ENCODE measurements at regions of chr19 and their contacts with region 1.

Region 1: GRCh38 chr19:1020868-1021425 is at the start of gene TMEM259:
- DNase-seq: peak; percentile 95
- ATAC-seq: peak; percentile 87
- H3K4me3 Mint-ChIP-seq: peak within 1 kb of the TSS; percentile 87
- H3K27ac Mint-ChIP-seq: peak within 1 kb of the TSS; percentile 99
- H3K4me1 Mint-ChIP-seq: peaks cover 53% of the 10 kb centered on the region
- H3K27me3 Mint-ChIP-seq: no peaks in the 10 kb centered on the region
- CTCF ChIP-seq: no peak
- total RNA-seq, gene TMEM259: 223 and 257 TPM in 2 replicates

Region 2: GRCh38 chr19:1001538-1002166 is 19.3 kb before region 1 on chr19:
- CTCF ChIA-PET with region 1: interaction called, 3 read pairs
- POLR2A ChIA-PET with region 1: interaction called, 3 read pairs
- intact Hi-C with region 1: loop called (anchors 2 kb)
- DNase-seq: peak; percentile 75
- ATAC-seq: peak; percentile 77
- H3K4me3 Mint-ChIP-seq: no peak overlapping the region
- H3K27ac Mint-ChIP-seq: no peak overlapping the region
- H3K4me1 Mint-ChIP-seq: peaks cover 13% of the 10 kb centered on the region
- H3K27me3 Mint-ChIP-seq: peaks cover 29% of the 10 kb centered on the region
- CTCF ChIP-seq: no peak

Region 3: DNA sequence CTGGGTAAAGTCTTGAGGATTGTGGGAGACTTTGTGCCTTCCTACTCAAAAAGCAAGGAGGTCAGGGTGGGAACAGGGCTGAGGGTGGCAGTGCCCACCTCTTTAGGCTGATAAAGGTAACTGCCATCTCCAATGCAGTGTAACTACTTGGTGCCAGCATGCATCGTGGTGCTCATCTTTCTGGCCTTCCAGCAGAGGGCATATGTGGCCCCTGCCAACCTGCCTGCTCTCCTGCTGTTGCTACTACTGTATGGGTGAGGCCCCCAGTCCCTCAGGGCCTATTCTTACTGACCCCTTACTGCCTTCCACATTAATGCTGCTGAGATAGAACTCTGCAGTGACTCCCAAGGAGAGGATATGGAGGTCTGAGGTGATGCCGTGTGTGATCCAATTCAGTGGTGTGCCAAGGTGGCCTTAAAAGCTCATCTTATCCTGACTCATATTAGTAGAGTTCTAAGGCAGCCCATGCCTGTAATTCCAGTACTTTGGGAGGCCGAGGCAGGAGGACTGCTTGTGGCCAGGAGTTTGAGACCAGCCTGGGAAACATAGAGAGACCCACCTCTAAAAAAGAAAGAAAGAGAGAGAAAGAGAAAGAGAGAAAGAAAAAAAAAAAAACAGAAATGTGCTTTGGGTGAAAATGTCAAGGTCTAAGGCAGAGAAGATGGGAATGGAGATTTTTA is 36.4 kb after region 1 on chr19:
- CTCF ChIA-PET with region 1: no interaction called
- POLR2A ChIA-PET with region 1: no interaction called
- intact Hi-C with region 1: no loop called
- DNase-seq: no peak
- ATAC-seq: peak; percentile 70
- H3K4me3 Mint-ChIP-seq: no peak overlapping the region
- H3K27ac Mint-ChIP-seq: peak overlapping the region; percentile 83
- H3K4me1 Mint-ChIP-seq: peaks cover 23% of the 10 kb centered on the region
- H3K27me3 Mint-ChIP-seq: no peaks in the 10 kb centered on the region
- CTCF ChIP-seq: no peak

Region 4: GRCh38 chr19:1205114-1206062 is 184.4 kb after region 1 on chr19 and contains the start of gene STK11:
- CTCF ChIA-PET with region 1: no interaction called
- POLR2A ChIA-PET with region 1: no interaction called
- intact Hi-C with region 1: loop called (anchors 1 kb)
- DNase-seq: peak; percentile 100
- ATAC-seq: peak; percentile 93
- H3K4me3 Mint-ChIP-seq: peak within 1 kb of the TSS; percentile 89
- H3K27ac Mint-ChIP-seq: peak within 1 kb of the TSS; percentile 80
- H3K4me1 Mint-ChIP-seq: peaks cover 33% of the 10 kb centered on the region
- H3K27me3 Mint-ChIP-seq: no peaks in the 10 kb centered on the region
- CTCF ChIP-seq: no peak
- total RNA-seq, gene STK11: 62.0 and 67.6 TPM in 2 replicates